ENCODE measurements at regions of chr2 and their contacts with region 1.

Region 1: DNA sequence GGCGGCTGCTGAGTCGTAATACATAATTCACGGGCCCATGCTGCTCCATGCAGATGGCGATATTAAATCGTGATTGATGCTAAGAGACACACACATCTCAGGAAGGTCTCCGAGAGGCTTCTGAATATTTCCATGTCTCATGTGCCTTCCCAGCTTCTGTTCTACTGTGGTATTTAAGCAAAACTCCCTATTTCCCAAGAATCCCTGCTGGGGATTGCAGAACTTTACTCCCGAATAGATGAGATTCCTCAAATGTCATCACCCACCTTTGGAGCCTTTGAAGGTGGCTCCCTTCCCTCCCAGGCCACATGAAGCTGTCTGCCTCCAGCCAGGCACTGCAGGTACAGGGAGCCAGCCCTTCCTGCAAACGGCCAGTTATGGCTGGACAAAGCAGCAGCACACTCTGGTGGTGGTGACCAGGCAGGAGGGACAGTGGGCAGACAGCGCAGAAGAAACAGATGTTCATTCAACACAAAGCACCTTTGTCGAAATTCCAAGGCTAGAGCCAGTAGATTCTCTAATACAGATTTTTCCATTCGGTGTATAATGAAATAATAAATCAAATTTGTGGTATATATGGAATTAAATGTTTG is 14.1 kb downstream of the NRP2 start:
- DNase-seq: no peak
- H3K4me3 ChIP-seq: no peak overlapping the region
- H3K27ac ChIP-seq: no peak overlapping the region
- H3K4me1 ChIP-seq: no peaks in the 10 kb centered on the region
- H3K27me3 ChIP-seq: no peaks in the 10 kb centered on the region
- CTCF ChIP-seq: no peak
- POLR2A ChIP-seq: no peak

Region 2: GRCh38 chr2:205734436-205735037 is 38.1 kb after region 1 on chr2:
- intact Hi-C with region 1: loop called (anchors 5 kb)
- DNase-seq: peak; percentile 74
- H3K4me3 ChIP-seq: no peak overlapping the region
- H3K27ac ChIP-seq: peak overlapping the region; percentile 46 to 68
- H3K4me1 ChIP-seq: peaks cover 11% of the 10 kb centered on the region
- H3K27me3 ChIP-seq: no peaks in the 10 kb centered on the region
- CTCF ChIP-seq: no peak
- POLR2A ChIP-seq: no peak

Region 3: DNA sequence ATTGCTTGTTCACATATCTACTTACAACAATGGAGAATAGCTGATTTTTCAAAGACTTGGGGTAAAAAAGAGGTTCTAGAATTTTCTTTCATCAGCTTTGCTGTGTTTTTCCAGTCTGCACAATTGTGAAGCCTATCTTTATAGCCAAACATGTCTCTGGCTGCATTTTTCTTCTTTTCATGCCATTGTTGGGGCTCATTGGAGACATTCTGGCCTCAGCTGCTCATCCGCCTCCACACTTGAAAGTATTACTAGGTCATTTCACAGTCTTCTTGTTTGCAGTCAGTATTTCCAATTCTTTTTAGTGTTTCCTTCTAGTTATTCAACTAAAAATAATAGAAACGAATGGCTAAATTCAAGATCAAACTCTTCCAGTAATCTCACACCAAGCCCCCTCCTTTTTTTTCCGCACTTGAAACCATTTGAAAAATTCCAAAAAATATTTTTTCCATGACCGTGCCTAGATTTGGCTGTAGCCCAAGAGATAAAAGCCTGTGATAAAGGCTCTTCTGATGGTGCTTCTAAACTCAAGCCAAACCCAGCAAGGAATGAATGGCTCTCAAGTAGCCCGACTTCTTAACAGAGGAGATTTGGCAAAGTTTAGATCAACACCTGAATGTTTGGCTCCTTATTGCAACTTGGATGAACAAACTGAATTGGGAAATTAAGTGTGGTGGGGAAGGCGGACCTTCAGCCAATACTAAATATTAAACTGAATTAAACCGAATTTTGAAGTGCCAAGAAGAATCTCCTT is 89.3 kb after region 1 on chr2:
- intact Hi-C with region 1: no loop called
- DNase-seq: no peak
- H3K4me3 ChIP-seq: no peak overlapping the region
- H3K27ac ChIP-seq: no peak overlapping the region
- H3K4me1 ChIP-seq: no peaks in the 10 kb centered on the region
- H3K27me3 ChIP-seq: no peaks in the 10 kb centered on the region
- CTCF ChIP-seq: no peak
- POLR2A ChIP-seq: no peak

Measured in prostate gland (tissue), 2 donors.